KBM-7 (cell line): ENCODE measurements at regions of chr10 and their contacts with region 1.

Region 1: GRCh38 chr10:48656241-48656913 is 28.3 kb upstream of the WDFY4 start:
- DNase-seq: peak; percentile 98

Region 2: DNA sequence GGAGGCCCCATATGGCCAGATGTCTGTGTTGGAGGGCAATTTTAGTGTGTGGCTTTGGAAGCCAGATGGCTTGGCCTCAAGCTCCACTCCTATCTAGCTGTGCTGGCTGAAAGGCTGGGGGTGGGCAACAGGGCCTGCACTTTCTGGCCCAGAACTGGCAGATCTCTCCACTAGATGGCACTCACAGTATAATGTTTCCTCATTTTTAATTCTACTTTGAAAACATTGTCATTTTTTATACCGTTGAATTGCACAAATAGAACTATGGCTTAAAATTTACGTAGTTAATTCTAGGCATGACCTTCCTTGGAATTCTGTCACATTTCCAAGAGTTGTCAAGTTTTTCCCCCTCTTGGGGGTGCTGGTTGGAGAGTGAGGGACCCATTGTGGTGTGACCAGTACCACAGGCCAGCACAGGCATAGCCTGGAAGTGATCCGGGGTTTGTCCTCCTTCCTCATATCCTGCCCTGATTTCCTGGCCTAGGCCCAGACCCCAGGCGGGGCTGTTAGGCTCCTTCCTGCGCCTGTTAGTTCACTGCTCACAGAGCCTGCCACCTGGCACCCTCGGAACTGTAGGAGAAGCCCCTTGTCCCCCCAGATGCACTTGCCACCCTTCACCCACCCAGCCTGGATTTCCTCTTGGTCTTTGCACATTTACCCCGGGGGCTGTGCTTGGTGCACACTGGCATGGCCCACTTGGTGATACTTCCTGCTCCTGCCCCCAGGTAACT is 104.4 kb before region 1 on chr10:
- in situ Hi-C with region 1: loop called (anchors 10 kb)
- DNase-seq: peak; percentile 79

Region 3: DNA sequence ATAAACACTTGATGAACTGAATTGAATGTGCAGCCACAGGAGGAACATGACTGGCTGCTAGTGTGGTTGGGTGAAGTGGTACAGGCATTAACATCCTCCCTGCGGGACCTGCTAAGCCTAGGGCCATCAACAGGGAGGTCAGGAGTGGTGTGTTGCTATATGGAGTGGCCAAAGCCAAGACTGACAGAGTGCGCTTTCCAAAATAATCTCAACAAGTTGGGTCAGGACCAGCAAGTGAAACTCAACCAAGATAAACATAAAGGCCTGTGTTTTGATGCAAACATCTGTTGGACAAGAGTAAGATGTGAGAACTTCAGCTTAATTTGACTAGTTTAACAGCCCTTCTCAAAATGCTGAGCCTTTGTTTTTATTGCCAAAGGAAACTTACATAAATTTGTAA is 126.0 kb after region 1 on chr10:
- in situ Hi-C with region 1: no loop called
- DNase-seq: no peak

Region 4: GRCh38 chr10:48802611-48803071 is 146.3 kb after region 1 on chr10:
- in situ Hi-C with region 1: no loop called
- DNase-seq: no peak

Region 5: DNA sequence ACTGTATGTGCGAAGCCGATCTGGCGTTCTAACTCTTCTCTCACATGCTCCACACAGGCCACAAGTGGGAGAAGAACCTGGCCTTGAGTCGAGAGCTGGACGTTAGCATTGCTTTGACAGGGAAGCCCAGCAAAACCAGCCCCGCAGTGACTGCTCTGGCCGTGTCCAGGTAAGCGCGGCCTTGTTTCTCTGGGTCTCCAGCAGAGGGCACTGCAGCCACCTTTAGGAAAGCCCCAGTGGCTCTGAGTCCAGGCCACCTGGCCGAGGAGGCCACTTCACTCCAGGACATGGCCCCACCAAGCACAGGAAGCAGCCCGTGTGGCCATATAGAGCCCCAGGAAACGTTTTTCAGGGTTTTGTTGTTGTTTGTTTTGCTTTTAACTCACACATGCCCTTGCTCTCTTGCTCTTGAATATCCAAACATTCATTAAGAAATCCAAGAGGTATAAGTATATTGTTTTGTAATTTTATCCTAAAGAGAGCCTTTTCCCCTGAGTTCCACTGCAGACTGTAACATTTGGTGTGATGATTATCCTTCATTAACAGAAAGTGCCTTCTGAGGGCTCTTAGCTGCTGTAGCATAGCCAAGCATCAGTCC is 325.0 kb after region 1 on chr10:
- in situ Hi-C with region 1: no loop called
- DNase-seq: peak; percentile 34

Region 6: GRCh38 chr10:49058463-49059255 is 402.3 kb after region 1 on chr10:
- in situ Hi-C with region 1: no loop called
- DNase-seq: no peak

Region 7: GRCh38 chr10:49518982-49519578 is 862.7 kb after region 1 on chr10:
- in situ Hi-C with region 1: loop called (anchors 25 kb)
- DNase-seq: peak; percentile 69